Activated CD8-positive, alpha-beta T cell treated with anti-CD3 and anti-CD28 coated beads for 36 hours (primary cell): ENCODE measurements at regions of chr7 and their contacts with region 1.

Region 1: DNA sequence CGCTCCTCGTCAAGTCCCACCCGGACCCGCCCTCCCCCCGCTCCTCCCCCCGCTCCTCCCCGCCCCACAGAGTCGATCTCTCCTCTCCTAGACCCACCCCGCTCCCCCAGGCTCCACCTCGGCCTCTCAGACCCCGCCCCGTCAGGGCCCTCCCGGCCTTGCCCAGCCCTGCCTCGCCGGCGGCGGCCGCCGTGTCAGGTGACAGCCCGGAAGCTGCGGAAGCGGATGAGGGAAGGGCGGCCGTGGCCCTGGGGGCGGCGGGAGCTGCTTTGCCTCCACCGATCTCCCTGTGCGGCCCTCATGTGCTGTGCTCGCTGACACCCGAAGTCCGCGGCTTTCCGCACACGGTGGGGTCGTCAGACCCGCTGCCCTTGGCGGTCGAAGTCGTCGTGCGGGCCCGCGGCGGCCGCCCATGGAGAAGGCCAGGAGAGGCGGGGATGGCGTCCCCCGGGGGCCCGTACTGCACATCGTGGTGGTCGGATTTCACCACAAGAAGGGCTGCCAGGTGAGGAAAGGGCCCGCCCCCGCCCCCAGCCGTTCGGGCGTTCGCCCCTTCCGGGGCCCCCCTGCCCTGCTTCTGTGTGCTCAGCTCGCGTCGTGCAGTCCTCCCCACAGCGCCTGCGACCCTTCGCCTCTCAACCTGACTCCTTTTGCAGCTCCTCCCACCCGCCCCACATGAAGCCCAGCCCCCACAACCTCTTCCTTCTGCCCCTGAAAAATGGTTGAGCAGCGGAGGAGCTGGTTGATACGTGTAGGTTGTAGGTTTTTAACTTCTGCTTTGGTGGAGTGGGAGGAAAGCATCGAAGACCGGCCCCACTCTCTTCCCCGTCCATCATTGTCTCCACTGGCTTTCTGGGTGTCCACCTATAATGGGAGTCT is at the start of gene AVL9:
- DNase-seq: peak; percentile 99
- ATAC-seq: peak; percentile 92
- H3K4me3 Mint-ChIP-seq: peak within 1 kb of the TSS; percentile 100
- H3K27ac Mint-ChIP-seq: peak within 1 kb of the TSS; percentile 100
- H3K4me1 Mint-ChIP-seq: peaks cover 38% of the 10 kb centered on the region
- H3K27me3 Mint-ChIP-seq: no peaks in the 10 kb centered on the region
- CTCF ChIP-seq: no peak
- total RNA-seq, gene AVL9: 54.0 to 63.5 TPM

Region 2: GRCh38 chr7:32506266-32507054 is 10.9 kb after region 1 on chr7:
- CTCF ChIA-PET with region 1: no interaction called
- POLR2A ChIA-PET with region 1: interaction called, 27 read pairs
- intact Hi-C with region 1: no loop called
- DNase-seq: peak; percentile 54
- ATAC-seq: peak; percentile 85
- H3K4me3 Mint-ChIP-seq: peak overlapping the region; percentile 46
- H3K27ac Mint-ChIP-seq: peak overlapping the region; percentile 91
- H3K4me1 Mint-ChIP-seq: peaks cover 66% of the 10 kb centered on the region
- H3K27me3 Mint-ChIP-seq: no peaks in the 10 kb centered on the region
- CTCF ChIP-seq: no peak

Region 3: GRCh38 chr7:32515890-32516550 is 20.5 kb after region 1 on chr7:
- CTCF ChIA-PET with region 1: interaction called, 3 read pairs
- POLR2A ChIA-PET with region 1: interaction called, 17 read pairs
- intact Hi-C with region 1: no loop called
- DNase-seq: peak; percentile 53
- ATAC-seq: peak; percentile 87
- H3K4me3 Mint-ChIP-seq: no peak overlapping the region
- H3K27ac Mint-ChIP-seq: peak overlapping the region; percentile 83
- H3K4me1 Mint-ChIP-seq: peaks cover 67% of the 10 kb centered on the region
- H3K27me3 Mint-ChIP-seq: no peaks in the 10 kb centered on the region
- CTCF ChIP-seq: no peak

Region 4: DNA sequence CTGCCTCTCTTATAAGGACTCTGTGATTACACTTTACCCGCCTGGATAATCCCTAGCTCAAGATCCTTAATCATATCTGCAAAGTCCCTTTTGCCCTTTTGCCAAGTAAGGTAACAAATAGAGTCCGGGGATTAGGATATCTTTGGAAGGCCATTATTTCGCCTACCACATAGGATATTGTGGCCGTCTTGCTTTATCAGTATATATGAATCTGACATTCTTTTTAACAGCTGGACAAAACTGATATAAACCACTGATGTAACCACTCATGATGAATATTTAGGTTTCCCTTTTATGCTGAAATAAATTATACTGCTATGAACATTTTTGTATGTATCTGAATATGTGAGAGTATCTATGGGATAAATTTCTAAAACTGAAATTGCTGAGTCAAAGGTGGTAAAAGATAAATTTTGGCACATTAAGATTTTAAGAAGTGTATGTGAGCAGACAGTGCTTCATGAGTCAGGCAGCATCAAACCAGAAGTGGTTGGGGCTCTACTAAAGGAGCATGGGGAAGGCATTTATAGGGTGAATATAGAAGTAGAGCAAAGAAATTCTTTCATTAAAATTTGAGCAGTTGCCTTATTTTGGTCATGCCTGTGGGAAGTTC is 44.5 kb after region 1 on chr7:
- CTCF ChIA-PET with region 1: interaction called, 3 read pairs
- POLR2A ChIA-PET with region 1: interaction called, 7 read pairs
- intact Hi-C with region 1: loop called (anchors 10 kb)
- DNase-seq: peak; percentile 5
- ATAC-seq: peak; percentile 71
- H3K4me3 Mint-ChIP-seq: no peak overlapping the region
- H3K27ac Mint-ChIP-seq: peak overlapping the region; percentile 70
- H3K4me1 Mint-ChIP-seq: peaks cover 42% of the 10 kb centered on the region
- H3K27me3 Mint-ChIP-seq: no peaks in the 10 kb centered on the region
- CTCF ChIP-seq: no peak

Region 5: DNA sequence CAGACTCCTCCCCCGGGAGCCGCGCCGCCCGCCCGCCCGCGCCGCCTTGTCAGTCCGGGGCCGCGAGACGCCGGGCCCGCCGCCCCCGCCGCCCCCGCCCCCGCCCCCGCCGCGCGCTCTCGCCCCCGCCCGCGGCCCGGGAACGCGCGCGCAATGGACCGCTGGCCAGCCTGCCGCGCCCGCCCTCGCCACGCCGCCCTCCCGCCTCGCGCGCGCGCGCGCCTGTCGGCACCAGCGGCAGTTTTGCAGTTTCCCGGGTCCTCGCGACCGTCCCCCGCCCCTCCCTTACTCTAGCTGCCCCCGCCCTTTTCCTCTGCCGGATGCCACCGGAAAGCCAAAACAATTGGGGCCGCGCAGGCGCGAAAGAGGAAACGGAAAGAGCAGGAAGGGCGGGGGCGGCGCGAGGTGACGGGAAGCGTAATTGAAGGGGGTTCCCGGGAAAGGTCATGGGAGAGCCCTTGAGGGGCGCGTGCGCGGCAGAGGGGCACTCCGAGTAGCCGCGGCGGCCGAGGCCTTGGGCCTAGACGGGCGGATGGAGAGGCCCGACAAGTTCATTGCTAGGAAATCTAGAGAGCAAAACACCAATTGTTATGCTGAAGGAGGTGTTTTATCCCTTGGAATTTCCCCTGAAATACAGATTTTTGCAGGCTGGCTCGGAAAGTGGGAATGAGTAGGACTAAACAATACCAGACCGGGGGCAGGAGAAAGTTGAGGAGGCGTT is 396.4 kb after region 1 on chr7:
- CTCF ChIA-PET with region 1: no interaction called
- POLR2A ChIA-PET with region 1: interaction called, 3 read pairs
- intact Hi-C with region 1: loop called (anchors 5 kb)
- DNase-seq: peak; percentile 99
- ATAC-seq: peak; percentile 69
- H3K4me3 Mint-ChIP-seq: peak overlapping the region; percentile 94
- H3K27ac Mint-ChIP-seq: peak overlapping the region; percentile 100
- H3K4me1 Mint-ChIP-seq: peaks cover 43% of the 10 kb centered on the region
- H3K27me3 Mint-ChIP-seq: no peaks in the 10 kb centered on the region
- CTCF ChIP-seq: no peak